GM13977 (cell line): ENCODE measurements at regions of chr1 and their contacts with region 1.

Region 1: GRCh38 chr1:66436378-66437145 is 97.4 kb upstream of the SGIP1 start:
- DNase-seq: peak; percentile 45
- CTCF ChIP-seq: peak; percentile 51

Region 2: GRCh38 chr1:66374561-66375111 is 61.9 kb before region 1 on chr1:
- in situ Hi-C with region 1: loop called (anchors 10 kb)
- DNase-seq: peak; percentile 31
- CTCF ChIP-seq: no peak

Region 3: GRCh38 chr1:66490816-66491215 is 54.3 kb after region 1 on chr1:
- in situ Hi-C with region 1: no loop called
- DNase-seq: no peak
- CTCF ChIP-seq: no peak

Region 4: GRCh38 chr1:66824771-66825170 is 388.2 kb after region 1 on chr1:
- in situ Hi-C with region 1: no loop called
- DNase-seq: no peak
- CTCF ChIP-seq: no peak